GM18951 (cell line): ENCODE measurements at regions of chr15 and their contacts with region 1.

Region 1: DNA sequence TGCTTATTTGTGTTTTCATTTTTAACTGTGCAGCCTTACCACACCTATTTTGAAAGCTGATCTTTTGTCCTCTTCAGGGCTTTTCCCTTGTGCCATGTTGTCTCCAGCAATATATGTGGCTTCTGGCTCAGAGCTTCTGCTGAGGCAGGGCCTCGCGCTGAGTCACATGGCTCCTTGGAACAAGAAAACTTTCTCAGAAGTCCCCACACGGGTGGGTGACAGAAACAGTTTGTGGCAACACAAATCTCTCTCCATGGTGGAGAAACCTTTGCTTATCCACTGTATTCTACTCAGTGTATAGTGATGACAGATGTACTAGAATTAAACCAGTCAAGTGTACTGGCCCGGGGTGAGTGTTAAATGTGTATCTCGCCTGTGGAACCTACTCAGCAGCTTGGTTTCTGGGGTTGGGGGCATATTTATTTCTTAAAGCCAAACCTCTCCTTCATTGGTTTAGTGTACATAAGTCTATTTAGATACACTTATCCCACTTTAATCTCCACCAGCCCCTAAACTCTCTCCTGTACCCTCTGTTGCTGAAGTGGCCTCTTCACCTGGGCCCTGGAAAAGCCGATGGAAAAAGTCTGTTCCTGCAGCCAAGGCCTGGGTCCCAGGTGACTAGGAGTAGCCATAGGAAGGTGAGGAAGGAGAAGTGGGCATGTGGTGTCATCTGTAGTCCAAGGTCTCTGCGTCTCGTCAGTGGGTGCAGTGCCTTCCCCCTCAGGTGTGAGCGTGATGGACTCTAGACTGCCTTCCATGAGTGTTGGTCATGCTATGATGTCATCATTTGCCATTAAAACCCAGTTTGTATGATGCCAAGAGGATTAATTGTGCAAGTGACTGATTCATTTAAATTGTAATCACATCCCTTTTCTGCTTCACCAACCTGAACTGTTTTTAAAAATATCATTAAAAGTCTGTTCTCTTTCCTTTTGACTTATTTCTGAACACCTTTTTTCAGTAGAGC is 3.2 kb upstream of the FBXL22 start:
- POLR2A ChIP-seq: no peak

Region 2: DNA sequence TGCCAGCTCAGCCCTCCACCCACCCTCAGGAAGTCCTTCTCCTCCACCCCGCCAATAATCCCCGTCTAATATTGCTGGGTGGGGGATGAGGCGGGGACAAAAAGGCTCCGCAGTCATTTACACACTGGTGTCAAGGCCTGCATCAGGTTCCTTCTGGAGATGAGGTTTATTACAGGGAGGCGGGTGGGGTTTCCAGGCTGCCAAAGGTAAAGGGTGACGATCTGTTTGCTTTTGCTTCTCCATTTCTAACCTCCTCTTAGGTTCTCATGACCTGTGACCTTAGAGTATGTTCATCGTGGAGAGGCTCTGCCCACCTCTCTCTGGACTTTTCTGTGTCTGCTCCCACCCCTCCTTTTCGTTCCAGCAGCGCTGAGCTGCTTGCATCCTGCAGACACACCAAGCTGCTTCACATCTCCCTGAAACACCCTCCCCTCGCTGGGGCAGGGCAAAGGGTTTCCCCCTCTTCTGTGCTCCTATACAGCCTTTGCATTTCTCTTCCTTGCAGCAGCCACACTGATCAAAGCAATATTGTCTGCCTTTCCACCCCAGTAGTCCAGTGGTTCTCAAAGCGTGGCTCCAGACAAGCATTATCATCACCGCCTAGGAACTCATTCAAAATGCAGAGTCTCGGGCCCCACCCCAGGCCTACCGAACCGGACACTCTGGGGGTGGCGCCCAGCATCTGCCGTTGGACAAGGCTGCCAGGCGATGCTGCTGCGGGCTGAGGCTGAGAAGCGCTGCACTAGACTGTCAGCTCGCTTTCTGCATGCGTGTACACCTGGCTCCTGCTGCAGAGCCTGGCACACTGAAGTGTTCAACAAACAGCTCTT is 239.0 kb before region 1 on chr15:
- in situ Hi-C with region 1: no loop called
- POLR2A ChIP-seq: no peak

Region 3: DNA sequence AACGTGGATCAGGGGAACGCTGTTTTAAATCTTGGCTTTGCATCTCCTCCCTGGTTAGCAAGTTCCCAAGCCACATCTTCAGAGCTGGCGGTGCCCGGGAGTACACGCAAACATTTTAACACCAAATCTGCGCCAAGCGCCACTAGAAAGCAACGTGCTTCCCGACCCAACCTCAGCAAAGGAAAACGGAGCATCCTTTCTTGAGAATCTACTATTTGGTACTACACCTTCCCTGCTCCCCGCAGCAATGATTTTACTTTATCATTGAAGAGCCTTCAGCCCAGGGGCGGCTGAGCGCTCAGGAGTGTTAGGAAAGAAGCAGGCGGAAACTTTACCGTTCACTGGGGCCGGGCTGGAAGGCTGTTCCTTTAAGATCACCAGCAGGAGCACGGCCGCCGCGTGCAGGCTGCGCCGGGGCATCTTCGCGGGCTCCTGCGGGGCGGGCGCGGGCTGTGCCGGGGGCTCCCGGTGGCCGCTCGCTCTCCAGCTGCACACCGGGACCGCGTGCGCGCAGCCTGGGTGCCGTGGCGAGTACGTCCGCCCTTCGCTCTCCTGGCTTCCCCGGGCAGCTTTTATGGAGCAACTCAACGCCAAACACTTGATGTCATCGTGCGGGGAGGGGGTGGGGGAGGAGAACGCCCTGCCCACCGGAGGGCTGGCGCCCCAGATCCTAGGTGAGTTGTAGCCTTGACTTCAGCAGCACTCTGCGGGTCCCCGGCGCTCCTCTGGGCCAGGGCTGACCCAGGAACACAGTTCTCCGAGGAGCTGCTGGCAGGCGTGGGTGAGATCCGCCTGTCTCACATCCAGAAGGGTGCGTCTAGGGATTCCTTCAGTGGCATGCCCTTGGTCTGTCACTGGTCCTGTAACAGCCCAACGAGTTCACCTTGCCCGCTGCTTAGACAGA is 212.4 kb before region 1 on chr15 and contains the start of gene CA12:
- in situ Hi-C with region 1: no loop called
- POLR2A ChIP-seq: no peak

Region 4: GRCh38 chr15:63473999-63474809 is 119.8 kb before region 1 on chr15:
- in situ Hi-C with region 1: loop called (anchors 5 kb)
- POLR2A ChIP-seq: peak; percentile 33

Region 5: DNA sequence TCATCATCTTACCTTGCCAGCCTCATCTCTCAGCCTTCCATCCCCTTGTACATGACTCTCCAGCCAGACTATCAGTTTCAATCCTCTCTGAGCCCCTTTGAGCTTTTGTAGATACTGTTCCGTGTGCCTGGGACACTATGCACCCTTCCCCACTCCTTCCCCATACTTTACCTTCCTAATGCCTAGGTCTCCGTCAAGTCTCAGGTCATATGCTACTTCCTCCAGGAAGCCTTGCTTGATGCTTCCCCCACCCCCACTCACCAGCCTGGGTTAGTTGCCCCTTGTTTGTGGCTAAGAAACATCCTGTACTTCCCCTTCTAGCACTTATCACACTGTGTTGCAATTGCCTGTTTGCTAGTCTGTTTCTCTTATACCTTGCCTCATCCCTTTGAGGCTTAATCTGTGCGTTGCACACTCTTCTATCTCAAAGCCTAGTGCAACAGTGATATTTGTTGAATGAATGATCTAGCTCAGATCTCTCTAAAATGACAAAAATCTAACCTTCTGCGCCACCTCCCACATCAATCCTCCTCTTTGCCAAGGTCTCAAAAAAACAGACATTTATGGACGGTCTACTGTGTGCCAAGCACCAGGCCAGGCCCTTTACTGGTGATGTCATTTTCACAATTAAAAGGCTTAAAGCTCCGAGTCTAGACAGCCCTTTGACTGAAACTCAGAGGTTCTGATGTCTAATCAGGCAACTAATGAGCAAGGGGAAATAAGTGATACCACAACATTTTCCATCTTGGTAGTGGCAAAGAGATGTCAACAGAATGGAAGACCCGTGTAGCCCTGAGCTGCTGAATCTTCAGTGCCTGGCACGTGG is 96.1 kb before region 1 on chr15:
- in situ Hi-C with region 1: no loop called
- POLR2A ChIP-seq: no peak